Breast epithelium (tissue), 4 donors: ENCODE measurements at regions of chr2 and their contacts with region 1.

Region 1: GRCh38 chr2:36450466-36451196 is 95.1 kb downstream of the CRIM1 start:
- DNase-seq: no peak
- H3K4me3 ChIP-seq: no peak overlapping the region
- H3K27ac ChIP-seq: peak overlapping the region; percentile 69 to 82
- H3K4me1 ChIP-seq: no peaks in the 10 kb centered on the region
- H3K27me3 ChIP-seq: no peaks in the 10 kb centered on the region
- CTCF ChIP-seq: no peak
- POLR2A ChIP-seq: no peak

Region 2: DNA sequence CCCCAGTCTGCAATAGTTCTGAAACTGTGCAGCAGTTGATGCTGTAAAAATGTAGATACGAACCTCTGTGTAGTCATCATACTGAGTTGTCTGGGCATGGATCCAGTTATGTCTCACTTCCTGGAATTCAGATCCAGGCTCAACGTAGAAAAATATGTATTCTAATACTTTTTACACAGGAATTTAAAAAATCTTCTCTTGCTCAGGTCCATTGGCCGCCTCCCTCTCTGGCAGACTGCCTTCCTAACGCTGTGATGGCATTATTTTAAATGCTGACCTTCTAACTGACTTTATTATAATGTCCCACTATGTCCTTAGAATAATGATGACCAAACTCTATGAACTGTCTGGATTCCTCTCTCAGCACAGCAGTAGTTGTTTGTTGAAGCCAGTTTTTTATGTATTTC is 27.7 kb after region 1 on chr2:
- intact Hi-C with region 1: no loop called
- DNase-seq: peak in 1 of 2 donors; percentile 45
- H3K4me3 ChIP-seq: no peak overlapping the region
- H3K27ac ChIP-seq: peak overlapping the region; percentile 53 to 70
- H3K4me1 ChIP-seq: peaks cover 0 to 10% of the 10 kb centered on the region in 2 donors
- H3K27me3 ChIP-seq: no peaks in the 10 kb centered on the region
- CTCF ChIP-seq: no peak
- POLR2A ChIP-seq: no peak

Region 3: GRCh38 chr2:36523153-36523552 is 72.5 kb after region 1 on chr2:
- intact Hi-C with region 1: loop called (anchors 2 kb)
- DNase-seq: no peak
- H3K4me3 ChIP-seq: no peak overlapping the region
- H3K27ac ChIP-seq: no peak overlapping the region
- H3K4me1 ChIP-seq: no peaks in the 10 kb centered on the region
- H3K27me3 ChIP-seq: no peaks in the 10 kb centered on the region
- CTCF ChIP-seq: no peak
- POLR2A ChIP-seq: no peak

Region 4: DNA sequence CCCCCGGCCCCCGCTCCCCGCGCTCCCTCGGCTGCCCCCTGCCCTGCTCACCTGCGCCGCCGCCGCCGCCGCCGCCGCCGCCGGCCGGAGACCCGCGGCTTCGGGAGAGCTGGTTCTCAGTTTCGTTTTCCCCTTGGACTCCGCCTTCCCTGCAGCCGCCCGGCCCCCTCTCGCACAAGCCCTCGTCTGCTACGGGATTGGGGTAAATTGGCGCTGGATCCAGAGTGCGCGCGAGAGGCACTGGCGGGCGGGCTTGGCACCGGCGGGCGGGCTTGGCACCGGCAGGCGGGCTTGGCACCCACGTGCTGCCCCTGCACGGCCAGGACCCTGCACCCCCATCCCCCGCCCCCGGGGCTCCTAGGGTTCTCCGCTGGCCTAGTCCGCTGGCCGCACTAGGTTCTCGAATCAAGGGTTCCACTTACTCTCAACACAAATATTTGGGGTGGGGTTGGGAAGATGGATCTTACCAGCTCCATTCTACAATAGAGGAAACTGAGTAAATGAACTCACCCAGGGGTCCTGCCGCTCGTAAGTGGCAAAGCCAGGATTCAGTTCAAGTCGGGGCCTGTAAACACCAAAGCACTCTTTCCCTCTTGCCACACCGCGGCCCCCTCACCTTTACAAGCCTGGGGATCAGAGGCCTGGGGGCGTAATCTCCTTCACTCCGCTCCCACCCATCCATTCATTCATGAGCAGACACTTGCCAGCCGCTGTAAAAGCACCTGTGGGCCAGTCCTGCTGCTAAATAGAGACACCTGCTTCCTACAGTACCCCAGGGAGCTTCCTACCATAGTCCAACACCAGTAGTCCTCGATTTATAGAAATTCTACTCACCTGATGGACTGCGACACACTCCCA is 706.5 kb after region 1 on chr2 and contains the start of gene EIF2AK2:
- intact Hi-C with region 1: no loop called
- DNase-seq: peak; percentile 73 to 84
- H3K4me3 ChIP-seq: peak within 1 kb of the TSS; percentile 78 to 98 (median 94)
- H3K27ac ChIP-seq: peak within 1 kb of the TSS; percentile 91 to 94
- H3K4me1 ChIP-seq: peaks cover 0 to 5% of the 10 kb centered on the region in 2 donors
- H3K27me3 ChIP-seq: no peaks in the 10 kb centered on the region
- CTCF ChIP-seq: no peak
- POLR2A ChIP-seq: no peak
- total RNA-seq, gene EIF2AK2: 22.3 to 33.2 (median 23.5) TPM